ENCODE measurements at regions of chr15 and their contacts with region 1.

Region 1: DNA sequence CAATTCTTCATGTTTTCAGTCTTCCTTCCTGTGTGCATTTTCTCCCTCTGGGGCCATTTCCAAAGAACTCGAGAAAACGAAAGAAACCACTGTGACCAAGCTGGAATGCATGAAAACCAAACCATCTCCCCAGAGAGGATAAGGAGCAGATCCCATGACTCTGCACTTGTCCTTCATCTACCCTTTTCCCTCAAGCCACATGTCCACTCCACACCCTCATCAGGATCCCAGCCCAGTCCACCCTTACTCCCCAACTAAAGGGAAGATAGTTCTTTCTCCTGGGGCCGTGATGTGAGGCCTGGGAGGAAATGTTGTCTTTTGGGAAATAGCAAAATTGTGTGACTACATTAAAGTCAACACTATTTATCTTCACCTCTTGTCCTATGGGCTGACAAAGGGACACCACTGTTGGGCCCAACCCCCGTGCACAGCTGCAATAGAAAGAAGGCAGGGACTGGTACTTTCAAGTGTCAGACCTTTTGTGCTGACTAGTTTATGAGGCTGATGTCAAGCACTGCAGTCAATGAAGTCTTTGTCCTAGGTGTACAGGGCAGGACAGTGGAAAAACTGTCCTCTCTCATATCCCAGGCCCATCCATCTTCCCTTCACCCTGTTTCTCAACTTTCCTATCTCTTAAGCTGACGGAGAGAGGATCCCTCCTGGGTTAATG is 487.1 kb upstream of the NR2F2 start:
- DNase-seq: no peak
- H3K4me3 Mint-ChIP-seq: no peak overlapping the region
- H3K27ac Mint-ChIP-seq: no peak overlapping the region
- H3K4me1 Mint-ChIP-seq: peaks cover 36% of the 10 kb centered on the region
- H3K27me3 Mint-ChIP-seq: no peaks in the 10 kb centered on the region

Region 2: DNA sequence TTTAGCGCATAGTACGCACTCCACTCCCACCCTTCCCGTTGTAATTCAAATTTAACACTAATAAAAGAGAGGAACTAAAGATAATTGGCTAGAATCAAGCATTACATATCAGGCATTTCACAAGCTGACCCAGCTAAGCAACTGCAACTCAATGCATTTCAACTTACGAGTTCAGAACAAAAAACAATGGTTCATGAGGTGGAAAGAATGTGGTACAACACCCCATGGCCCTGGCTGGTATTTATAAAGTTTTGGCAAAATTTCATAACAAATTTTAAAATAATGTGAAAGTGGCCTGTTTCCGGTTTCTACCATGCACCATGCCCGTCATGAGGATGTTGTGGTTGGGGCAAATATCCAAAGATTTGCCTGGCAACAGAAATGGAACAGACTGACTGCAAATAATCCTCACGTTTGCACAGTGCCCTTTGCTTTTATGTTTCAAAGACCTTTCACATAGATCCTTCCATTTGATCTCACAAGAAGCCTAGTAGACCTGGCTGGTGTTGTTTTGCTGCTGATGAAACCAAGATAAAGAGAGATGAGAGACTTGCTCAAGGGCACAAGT is 31.8 kb after region 1 on chr15:
- CTCF ChIA-PET with region 1: no interaction called
- intact Hi-C with region 1: loop called (anchors 5 kb)
- DNase-seq: peak; percentile 32
- H3K4me3 Mint-ChIP-seq: no peak overlapping the region
- H3K27ac Mint-ChIP-seq: no peak overlapping the region
- H3K4me1 Mint-ChIP-seq: peaks cover 33% of the 10 kb centered on the region
- H3K27me3 Mint-ChIP-seq: no peaks in the 10 kb centered on the region